ENCODE measurements at regions of chr20 and their contacts with region 1.

Region 1: DNA sequence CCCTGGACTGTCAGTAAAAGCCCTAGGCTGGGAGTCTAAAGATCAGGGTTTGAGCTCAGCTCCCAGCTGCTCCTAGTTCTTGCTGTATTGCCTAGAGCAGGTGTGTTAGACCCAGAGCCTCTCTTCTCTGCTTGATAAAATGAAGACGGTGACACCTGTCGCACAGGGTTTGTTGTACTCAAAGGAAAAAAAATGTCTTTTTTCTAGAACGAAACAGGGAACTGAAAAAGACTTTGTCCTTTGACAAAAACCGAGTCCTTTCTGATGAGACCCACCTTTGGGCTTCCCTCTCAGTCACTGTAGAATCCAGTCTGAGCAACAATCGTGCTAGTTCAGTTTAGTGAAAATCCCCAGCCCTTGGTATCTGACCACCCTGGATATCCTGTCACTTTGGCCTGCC is 102.1 kb upstream of the LAMP5 start:
- DNase-seq: no peak
- ATAC-seq: no peak
- H3K4me3 ChIP-seq: no peak overlapping the region
- H3K27ac ChIP-seq: no peak overlapping the region
- H3K4me1 ChIP-seq: no peaks in the 10 kb centered on the region
- H3K27me3 ChIP-seq: no peaks in the 10 kb centered on the region
- CTCF ChIP-seq: no peak
- POLR2A ChIP-seq: no peak

Region 2: DNA sequence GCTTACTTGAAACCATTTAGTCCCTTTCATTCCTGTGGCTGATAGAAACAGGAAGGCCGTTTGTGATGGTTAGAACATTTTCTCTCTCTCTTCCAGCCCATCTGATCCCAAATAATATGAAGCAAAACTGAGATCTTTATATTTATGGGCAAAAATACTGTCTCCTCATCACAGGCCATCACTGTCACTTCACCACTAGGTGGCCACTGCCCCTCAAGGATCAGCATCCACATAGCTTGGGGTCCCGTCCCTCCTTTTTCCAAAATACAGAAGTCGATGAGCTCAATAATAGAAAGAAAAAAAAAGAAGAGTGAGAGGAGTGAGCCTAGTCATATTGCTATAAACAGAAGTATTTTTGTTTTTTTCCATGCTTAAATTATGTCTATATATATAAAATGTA is 55.7 kb after region 1 on chr20:
- intact Hi-C with region 1: no loop called
- DNase-seq: no peak
- ATAC-seq: no peak
- H3K4me3 ChIP-seq: no peak overlapping the region
- H3K27ac ChIP-seq: no peak overlapping the region
- H3K4me1 ChIP-seq: no peaks in the 10 kb centered on the region
- H3K27me3 ChIP-seq: no peaks in the 10 kb centered on the region
- CTCF ChIP-seq: peak in 3 of 4 donors; percentile 26 to 39 (median 38)
- POLR2A ChIP-seq: no peak

Region 3: DNA sequence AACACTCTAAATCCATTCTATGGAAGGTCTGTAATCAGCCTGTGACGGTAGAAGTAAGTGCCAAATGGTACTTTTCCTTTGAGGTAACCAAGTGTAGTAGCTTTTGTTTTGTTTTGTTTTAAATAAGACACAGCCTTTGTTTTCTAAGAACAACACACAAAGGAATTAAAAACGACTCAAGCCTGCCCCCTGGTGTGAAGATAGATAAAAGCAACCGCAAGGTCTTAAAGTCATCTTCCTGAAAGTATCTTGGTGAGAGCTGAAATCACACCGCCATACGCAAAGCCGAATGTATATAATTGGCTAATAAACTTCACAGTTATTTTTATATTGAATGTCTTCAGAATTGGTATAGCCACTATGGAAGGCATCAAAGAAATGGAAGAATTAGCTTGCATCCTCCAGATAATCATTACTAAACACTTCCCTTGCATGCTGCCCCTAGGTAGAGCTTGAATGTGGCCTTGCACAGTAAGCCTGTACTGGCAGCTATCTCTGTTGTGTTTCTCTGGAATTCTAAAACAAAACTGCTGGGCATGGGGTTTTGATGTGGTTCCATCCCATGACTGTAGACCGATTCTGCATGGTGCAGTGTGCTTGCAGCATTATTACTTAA is 197.7 kb after region 1 on chr20:
- intact Hi-C with region 1: loop called (anchors 5 to 10 kb)
- DNase-seq: peak in 1 of 3 donors; percentile 49
- ATAC-seq: peak; percentile 45 to 66 (median 63)
- H3K4me3 ChIP-seq: no peak overlapping the region
- H3K27ac ChIP-seq: no peak overlapping the region
- H3K4me1 ChIP-seq: no peaks in the 10 kb centered on the region
- H3K27me3 ChIP-seq: no peaks in the 10 kb centered on the region
- CTCF ChIP-seq: peak; percentile 67 to 72 (median 70)
- POLR2A ChIP-seq: no peak

Region 4: GRCh38 chr20:9616833-9617489 is 204.7 kb after region 1 on chr20:
- intact Hi-C with region 1: loop called (anchors 5 to 10 kb)
- DNase-seq: peak in 2 of 3 donors; percentile 47 to 60
- ATAC-seq: peak; percentile 77 to 87 (median 84)
- H3K4me3 ChIP-seq: no peak overlapping the region
- H3K27ac ChIP-seq: no peak overlapping the region
- H3K4me1 ChIP-seq: peaks cover 0 to 2% (median 0%) of the 10 kb centered on the region in 4 donors
- H3K27me3 ChIP-seq: no peaks in the 10 kb centered on the region
- CTCF ChIP-seq: peak; percentile 76 to 89 (median 84)
- POLR2A ChIP-seq: no peak

Measured in right lobe of liver (tissue), 6 donors.